Left cardiac atrium (tissue), 4 donors: ENCODE measurements at regions of chr11 and their contacts with region 1.

Region 1: GRCh38 chr11:1917671-1918516 is 1.6 kb upstream of the TNNT3 start:
- DNase-seq: no peak
- ATAC-seq: peak; percentile 7 to 18

Region 2: DNA sequence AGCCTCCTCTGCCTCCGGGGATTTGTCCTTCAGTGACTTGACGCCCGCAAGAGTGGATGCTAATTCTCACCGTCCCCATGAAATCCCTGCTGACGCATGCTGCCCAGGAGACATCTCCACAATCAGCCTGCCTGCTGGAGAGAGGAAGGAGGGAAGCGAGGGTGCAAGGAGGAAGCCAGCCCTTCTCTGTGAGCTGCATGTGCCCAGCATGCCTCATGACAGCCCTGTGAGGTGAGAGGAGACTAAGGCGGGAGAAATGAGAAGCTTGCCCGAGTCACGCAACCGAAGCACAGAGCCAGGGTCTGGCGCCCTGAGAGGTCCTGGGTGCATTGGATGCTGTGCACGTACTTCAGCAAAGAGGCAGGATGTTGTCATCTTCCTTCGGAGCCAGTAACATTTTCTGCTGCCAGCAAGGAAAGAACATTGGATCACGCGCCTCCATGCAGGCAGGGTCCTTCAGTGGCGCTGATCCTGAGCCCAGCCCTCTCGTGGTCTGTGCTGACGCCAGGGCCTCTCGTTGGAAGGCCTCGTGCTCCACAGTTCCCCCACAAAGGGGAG is 248.2 kb before region 1 on chr11:
- intact Hi-C with region 1: no loop called
- DNase-seq: no peak
- ATAC-seq: no peak

Region 3: GRCh38 chr11:1882519-1883238 is 35.2 kb before region 1 on chr11:
- intact Hi-C with region 1: loop called (anchors 5 kb)
- DNase-seq: peak; percentile 86
- ATAC-seq: peak; percentile 79 to 87

Region 4: DNA sequence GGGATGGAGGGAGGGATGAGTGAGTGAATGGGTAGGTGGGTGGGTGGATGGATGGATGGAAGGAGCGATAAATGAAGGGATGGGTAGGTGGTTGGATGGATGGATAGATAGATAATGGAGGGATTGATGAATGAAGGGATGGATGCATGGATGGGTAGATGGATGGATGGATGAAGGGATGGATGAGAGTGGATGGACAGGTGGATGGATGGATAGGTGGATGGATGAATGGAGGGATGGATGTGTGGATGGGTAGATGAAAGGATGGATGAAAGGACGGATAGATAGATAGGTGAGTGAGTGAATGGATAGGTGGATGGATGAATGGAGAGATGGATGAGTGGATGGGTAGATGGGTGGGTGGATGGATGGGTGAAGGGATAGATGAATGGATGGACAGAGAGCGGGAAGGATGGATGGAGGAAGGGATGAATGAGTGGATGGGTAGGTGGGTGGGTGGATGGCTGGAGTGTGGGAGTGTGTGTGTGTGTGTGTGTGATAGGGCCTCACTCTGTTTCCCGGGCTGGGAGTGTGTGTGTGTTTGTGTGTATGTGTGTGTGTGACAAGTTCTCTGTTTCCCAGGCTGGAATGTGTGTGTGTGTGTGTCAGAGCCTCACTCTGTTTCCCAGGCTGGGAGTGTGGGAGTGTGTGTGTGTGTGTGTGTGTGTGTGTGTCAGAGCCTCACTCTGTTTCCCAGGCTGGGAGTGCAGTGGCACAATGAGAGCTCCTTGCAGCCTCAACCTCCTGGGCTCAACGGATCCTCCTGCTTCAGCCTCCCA is 24.1 kb before region 1 on chr11:
- intact Hi-C with region 1: loop called (anchors 1 kb)
- DNase-seq: no peak
- ATAC-seq: no peak

Region 5: GRCh38 chr11:1936776-1937615 is 19.1 kb after region 1 on chr11:
- intact Hi-C with region 1: loop called in 1 of 2 experiments (anchors 2 kb)
- DNase-seq: peak; percentile 19
- ATAC-seq: no peak

Region 6: DNA sequence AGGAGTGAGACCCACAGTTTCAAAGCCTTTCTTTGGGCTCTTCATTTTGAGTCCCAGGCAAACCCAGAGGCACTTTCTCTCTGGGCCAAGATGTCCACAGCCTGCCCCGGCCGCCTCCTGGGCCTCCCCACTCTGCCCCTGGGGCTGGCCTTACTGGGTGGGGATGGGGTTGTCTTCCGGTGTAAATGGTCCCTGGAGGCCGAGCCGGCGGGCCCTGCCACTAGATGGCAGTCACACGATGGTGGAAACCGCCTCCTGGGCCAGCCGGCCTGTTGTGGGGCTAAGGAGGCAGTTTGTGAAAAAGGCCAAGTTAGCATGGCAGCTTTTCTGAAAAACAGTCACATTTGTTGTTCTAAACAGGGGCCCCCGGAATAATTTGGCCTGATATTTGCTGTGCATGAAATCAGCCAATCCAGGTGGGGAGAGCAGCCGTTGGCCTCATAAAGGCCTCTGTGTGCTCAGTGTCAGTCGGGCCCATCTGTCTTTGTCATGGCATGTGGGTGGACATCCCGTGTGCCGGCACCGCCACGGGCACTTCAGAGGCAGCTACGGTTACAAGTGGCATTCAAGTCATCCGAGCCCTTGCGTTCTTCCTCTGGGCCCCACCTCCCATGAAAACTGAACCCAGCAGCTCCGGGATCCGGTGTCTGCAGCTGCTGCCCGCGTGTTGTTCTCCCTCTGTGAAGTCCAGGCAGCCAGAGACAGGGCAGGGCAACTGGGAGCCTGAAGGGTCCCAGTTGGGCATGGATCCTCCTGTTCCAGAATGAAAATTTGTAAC is 35.8 kb after region 1 on chr11:
- intact Hi-C with region 1: no loop called
- DNase-seq: no peak
- ATAC-seq: peak; percentile 43 to 68